GM23248 (cell line): ENCODE measurements at regions of chr10 and their contacts with region 1.

Region 1: DNA sequence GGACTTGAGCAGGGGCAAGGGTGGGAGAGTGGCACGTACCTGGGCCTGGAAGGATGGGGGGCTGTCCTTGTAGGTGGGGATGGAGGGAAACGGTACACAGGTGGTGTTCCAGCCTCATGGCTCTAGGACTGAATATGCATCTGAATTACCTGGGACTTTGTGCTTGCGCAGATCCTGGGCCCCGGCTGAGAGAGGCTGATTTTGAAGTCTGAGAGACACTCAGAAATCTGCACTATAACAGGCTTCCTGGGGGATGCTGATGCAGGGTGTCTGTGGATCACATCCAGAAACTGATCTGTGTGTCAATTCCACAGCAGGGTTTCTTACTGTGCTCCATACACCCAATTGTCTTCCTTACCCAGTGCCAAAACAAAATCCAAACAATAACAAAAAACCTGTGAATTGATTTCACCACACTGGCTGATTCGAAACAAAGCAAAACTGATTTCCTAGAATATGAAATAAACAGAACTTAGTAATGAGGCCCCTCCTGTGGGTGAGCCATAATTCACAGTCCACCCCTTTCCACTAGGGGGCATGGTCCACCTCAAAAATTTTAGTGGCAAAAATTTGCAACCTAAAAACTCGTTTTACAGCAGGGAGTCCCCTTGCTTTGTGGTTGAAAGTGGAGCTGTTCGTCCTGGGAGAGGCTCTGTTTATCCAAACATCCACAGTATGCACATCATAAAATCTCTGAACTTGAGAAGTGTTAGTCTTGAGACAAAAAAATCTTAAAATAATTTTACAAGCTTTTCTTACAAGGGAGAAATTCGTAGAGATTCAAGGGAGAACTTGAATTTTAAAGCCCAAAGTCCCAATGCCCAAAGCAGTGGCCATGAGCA is 32.0 kb upstream of the PLEKHA1 start:
- DNase-seq: peak; percentile 72
- H3K4me3 ChIP-seq: no peak overlapping the region
- H3K27ac ChIP-seq: no peak overlapping the region
- H3K4me1 ChIP-seq: peaks cover 6% of the 10 kb centered on the region; the same call in 1 of the 2 replicates
- H3K27me3 ChIP-seq: no peaks in the 10 kb centered on the region

Region 2: GRCh38 chr10:121600611-121601010 is 741.9 kb before region 1 on chr10:
- in situ Hi-C with region 1: no loop called
- DNase-seq: no peak
- H3K4me3 ChIP-seq: no peak overlapping the region
- H3K27ac ChIP-seq: no peak overlapping the region
- H3K4me1 ChIP-seq: peaks cover 3% of the 10 kb centered on the region; the same call in 1 of the 2 replicates
- H3K27me3 ChIP-seq: peaks cover 53% of the 10 kb centered on the region

Region 3: DNA sequence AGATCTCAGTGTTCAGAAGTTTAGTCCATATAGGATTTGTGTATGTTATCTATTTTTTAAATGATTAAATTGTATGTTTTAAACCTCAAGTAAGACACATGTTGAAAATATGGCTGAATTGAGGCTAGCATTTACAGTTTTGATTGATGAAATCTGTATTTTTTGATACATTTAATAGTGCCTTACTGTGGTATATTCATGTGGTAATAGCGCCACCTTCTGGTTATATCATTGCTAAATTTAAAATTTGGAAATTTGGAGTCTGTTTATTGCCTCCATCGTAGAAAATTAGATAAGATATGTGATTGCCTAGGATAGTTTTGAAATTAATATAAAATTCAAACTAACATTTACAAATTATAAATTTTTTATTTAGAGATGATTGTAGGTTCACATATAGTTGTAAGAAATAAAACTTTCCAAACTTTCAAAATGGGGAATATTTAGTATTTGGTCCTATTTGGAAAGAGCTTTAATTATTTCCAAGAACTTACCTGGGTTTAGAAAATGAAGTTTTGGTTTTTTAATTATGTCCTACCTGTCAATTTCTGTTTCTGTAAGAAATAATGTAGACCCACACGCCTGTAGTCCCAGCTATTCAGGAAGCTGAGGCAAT is 92.8 kb after region 1 on chr10:
- in situ Hi-C with region 1: loop called (anchors 10 kb)
- DNase-seq: peak; percentile 72
- H3K4me3 ChIP-seq: no peak overlapping the region
- H3K27ac ChIP-seq: no peak overlapping the region
- H3K4me1 ChIP-seq: no peaks in the 10 kb centered on the region
- H3K27me3 ChIP-seq: no peaks in the 10 kb centered on the region